ENCODE measurements at regions of chr16 and their contacts with region 1.

Region 1: DNA sequence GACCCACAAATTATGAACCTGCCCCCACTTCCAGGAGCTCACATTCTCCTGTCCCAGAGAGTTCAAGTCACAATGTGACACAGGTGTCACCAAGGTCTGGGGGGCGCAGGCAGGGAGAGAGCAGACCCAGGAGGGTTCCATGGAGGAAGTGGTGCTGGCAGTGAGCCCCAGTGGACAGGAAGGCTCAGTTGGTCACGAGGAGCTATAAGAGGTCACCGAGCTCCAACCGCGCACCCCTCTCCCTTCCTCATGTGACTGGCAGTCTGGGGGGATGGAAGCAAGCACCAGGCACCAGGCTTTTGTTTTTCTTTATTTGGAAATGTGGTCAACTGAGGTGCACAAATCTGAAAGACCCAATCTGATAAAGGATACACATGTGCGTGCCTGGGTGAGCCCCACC is 2.5 kb downstream of the ITGAD start:
- DNase-seq: no peak
- ATAC-seq: no peak
- H3K4me3 ChIP-seq: no peak overlapping the region
- H3K27ac ChIP-seq: no peak overlapping the region
- H3K4me1 ChIP-seq: no peaks in the 10 kb centered on the region
- H3K27me3 ChIP-seq: no peaks in the 10 kb centered on the region; the same call in 1 of the 2 replicates
- CTCF ChIP-seq: no peak
- POLR2A ChIP-seq: no peak
- RAD21 ChIP-seq: no peak

Region 2: GRCh38 chr16:30910427-30911029 is 485.1 kb before region 1 on chr16:
- CTCF ChIA-PET with region 1: no interaction called
- POLR2A ChIA-PET with region 1: no interaction called
- dilution Hi-C with region 1: no loop called
- in situ Hi-C with region 1: no loop called
- intact Hi-C with region 1: no loop called
- DNase-seq: no peak
- ATAC-seq: no peak
- H3K4me3 ChIP-seq: no peak overlapping the region
- H3K27ac ChIP-seq: no peak overlapping the region
- H3K4me1 ChIP-seq: no peaks in the 10 kb centered on the region; the same call in 1 of the 2 replicates
- H3K27me3 ChIP-seq: no peaks in the 10 kb centered on the region
- CTCF ChIP-seq: no peak
- POLR2A ChIP-seq: no peak
- RAD21 ChIP-seq: no peak

Region 3: DNA sequence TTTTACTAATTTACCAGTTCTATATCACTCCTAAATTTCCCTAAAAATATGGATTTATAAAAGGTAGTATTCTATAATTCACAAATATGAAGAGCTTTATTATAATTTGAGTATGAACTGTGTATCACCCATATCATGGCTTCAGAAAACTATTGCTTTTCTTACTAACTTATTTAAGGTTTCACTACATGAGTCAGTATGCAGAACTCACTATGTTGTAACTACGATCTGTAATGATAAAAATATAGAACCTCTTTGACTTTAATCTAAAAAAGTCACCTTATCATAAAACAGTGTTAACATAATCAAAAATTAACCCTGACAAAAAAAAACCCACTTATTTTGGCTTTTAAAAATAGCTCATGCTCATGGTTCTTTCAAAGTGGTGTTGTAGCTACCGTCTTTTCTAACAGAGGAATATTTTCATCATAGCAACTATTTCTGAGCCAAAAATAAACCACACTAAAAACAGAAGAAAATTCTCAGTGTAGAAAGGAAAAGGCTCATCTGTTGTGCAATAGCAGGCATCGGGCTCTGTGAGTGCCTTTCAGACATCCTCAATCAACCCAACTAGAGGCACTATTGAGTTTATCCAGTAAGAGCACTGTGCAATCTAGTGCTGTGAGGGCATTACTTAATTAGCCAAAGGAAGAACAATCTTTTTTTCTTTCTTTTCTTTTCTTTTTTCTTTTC is 93.8 kb before region 1 on chr16:
- CTCF ChIA-PET with region 1: no interaction called
- POLR2A ChIA-PET with region 1: no interaction called
- dilution Hi-C with region 1: no loop called
- in situ Hi-C with region 1: no loop called
- intact Hi-C with region 1: loop called (anchors 10 kb)
- DNase-seq: no peak
- ATAC-seq: no peak
- H3K4me3 ChIP-seq: no peak overlapping the region
- H3K27ac ChIP-seq: no peak overlapping the region
- H3K4me1 ChIP-seq: no peaks in the 10 kb centered on the region
- H3K27me3 ChIP-seq: no peaks in the 10 kb centered on the region
- CTCF ChIP-seq: no peak
- POLR2A ChIP-seq: no peak
- RAD21 ChIP-seq: no peak

Region 4: GRCh38 chr16:31410082-31410481 is 14.4 kb after region 1 on chr16:
- CTCF ChIA-PET with region 1: no interaction called
- POLR2A ChIA-PET with region 1: interaction called, 14 read pairs
- dilution Hi-C with region 1: no loop called
- in situ Hi-C with region 1: no loop called
- intact Hi-C with region 1: no loop called
- DNase-seq: no peak
- ATAC-seq: no peak
- H3K4me3 ChIP-seq: no peak overlapping the region
- H3K27ac ChIP-seq: no peak overlapping the region
- H3K4me1 ChIP-seq: no peaks in the 10 kb centered on the region
- H3K27me3 ChIP-seq: peaks cover 15% of the 10 kb centered on the region
- CTCF ChIP-seq: no peak
- POLR2A ChIP-seq: no peak
- RAD21 ChIP-seq: no peak